Caco-2 (cell line): ENCODE measurements at regions of chr14 and their contacts with region 1.

Region 1: DNA sequence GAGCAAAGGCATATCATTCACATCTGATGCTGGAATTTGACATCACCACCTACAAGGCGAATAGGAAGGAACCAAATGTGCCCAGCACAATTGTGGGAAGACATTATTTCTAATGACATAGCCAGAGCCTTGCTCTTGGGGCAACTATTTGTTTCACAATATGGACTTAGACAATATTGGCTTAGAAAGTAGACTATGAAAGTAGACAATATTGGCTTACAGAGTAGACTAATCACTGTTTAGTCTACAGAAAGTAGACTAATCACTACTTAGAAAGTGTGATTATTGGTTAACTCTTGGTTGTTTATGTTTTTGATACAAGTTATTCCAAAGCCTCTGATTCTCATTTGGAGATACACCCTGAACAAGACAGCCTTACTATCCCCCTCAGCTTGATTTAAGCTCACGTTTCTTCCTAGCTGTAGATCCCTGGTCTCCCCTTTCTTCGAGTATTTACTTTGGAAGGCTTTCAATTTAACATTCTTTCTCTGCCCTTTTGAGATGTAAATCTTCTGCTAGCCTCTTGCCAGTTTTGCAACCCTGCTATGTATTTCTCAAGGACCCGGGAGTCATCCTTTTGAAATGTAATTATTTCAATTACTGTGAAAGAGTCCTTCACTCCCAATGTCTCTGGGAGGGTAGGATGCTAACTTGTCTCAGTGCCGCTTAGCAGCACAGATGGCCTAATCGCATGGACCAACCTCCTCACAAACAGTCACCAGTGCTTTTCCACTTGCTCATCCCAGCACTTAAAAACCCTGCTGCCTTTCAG is 843.2 kb downstream of the GALC start:
- DNase-seq: no peak
- H3K4me3 ChIP-seq: no peak overlapping the region
- H3K4me3 Mint-ChIP-seq: no peak overlapping the region
- H3K27ac Mint-ChIP-seq: no peak overlapping the region
- H3K4me1 ChIP-seq: no peaks in the 10 kb centered on the region
- H3K4me1 Mint-ChIP-seq: no peaks in the 10 kb centered on the region
- H3K27me3 ChIP-seq: no peaks in the 10 kb centered on the region
- H3K27me3 Mint-ChIP-seq: peaks cover 9% of the 10 kb centered on the region
- CTCF ChIP-seq: no peak

Region 2: GRCh38 chr14:86639146-86639545 is 510.6 kb before region 1 on chr14:
- CTCF ChIA-PET with region 1: no interaction called
- POLR2A ChIA-PET with region 1: no interaction called
- intact Hi-C with region 1: loop called (anchors 10 kb)
- DNase-seq: no peak
- H3K4me3 ChIP-seq: no peak overlapping the region
- H3K4me3 Mint-ChIP-seq: no peak overlapping the region
- H3K27ac Mint-ChIP-seq: no peak overlapping the region
- H3K4me1 ChIP-seq: no peaks in the 10 kb centered on the region
- H3K4me1 Mint-ChIP-seq: no peaks in the 10 kb centered on the region
- H3K27me3 ChIP-seq: no peaks in the 10 kb centered on the region
- H3K27me3 Mint-ChIP-seq: no peaks in the 10 kb centered on the region
- CTCF ChIP-seq: no peak

Region 3: DNA sequence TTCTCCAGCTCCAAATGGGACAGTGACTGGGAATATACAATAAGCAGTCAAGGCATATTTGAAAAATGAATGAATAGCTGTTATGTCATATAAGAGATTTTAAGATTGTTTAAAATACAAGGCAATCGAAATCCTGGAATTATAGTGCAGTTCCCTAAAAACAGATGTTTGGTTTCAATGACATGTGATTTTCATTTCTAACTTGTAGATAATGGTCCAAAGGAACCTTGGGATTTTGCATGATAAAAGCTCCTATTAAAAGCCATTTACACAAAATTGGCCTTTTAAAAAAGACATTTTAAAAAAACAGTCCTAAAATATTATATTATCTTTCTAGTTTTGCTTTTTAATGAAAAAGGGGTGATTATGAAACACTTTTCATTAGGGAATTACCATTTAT is 61.9 kb before region 1 on chr14:
- CTCF ChIA-PET with region 1: no interaction called
- POLR2A ChIA-PET with region 1: no interaction called
- intact Hi-C with region 1: no loop called
- DNase-seq: no peak
- H3K4me3 ChIP-seq: no peak overlapping the region
- H3K4me3 Mint-ChIP-seq: no peak overlapping the region
- H3K27ac Mint-ChIP-seq: no peak overlapping the region
- H3K4me1 ChIP-seq: no peaks in the 10 kb centered on the region
- H3K4me1 Mint-ChIP-seq: no peaks in the 10 kb centered on the region
- H3K27me3 ChIP-seq: no peaks in the 10 kb centered on the region
- H3K27me3 Mint-ChIP-seq: peaks cover 2% of the 10 kb centered on the region
- CTCF ChIP-seq: no peak

Region 4: DNA sequence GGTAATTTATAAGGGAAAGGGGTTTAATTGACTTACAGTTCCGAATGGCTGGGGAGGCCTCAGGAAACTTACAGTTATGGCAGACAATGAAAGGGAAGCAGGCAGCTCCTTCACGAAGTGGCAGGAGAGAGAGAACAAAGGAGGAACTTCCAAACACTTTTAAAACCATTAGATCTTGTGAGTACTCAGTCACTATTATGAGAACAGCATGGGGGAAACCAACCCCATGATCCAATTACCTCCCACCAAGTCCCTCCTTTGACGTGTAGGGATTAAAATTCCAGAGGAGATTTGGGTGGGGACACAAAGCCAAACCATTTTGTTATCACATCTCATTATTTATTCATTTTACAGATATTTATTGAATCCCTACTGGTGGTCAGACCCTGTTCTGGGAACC is 20.4 kb after region 1 on chr14:
- CTCF ChIA-PET with region 1: no interaction called
- POLR2A ChIA-PET with region 1: no interaction called
- intact Hi-C with region 1: no loop called
- DNase-seq: no peak
- H3K4me3 ChIP-seq: no peak overlapping the region
- H3K4me3 Mint-ChIP-seq: no peak overlapping the region
- H3K27ac Mint-ChIP-seq: no peak overlapping the region
- H3K4me1 ChIP-seq: no peaks in the 10 kb centered on the region
- H3K4me1 Mint-ChIP-seq: no peaks in the 10 kb centered on the region
- H3K27me3 ChIP-seq: no peaks in the 10 kb centered on the region
- H3K27me3 Mint-ChIP-seq: no peaks in the 10 kb centered on the region
- CTCF ChIP-seq: no peak